B cell (primary cell): ENCODE measurements at regions of chr6 and their contacts with region 1.

Region 1: GRCh38 chr6:158660333-158660754 is 10.5 kb downstream of the SYTL3 start:
- DNase-seq: peak; percentile 72
- ATAC-seq: peak; percentile 84
- H3K4me3 ChIP-seq: no peak overlapping the region
- H3K4me3 Mint-ChIP-seq: no peak overlapping the region
- H3K27ac ChIP-seq: no peak overlapping the region
- H3K27ac Mint-ChIP-seq: no peak overlapping the region
- H3K4me1 ChIP-seq: peaks cover 9 to 12% of the 10 kb centered on the region in 2 donors
- H3K4me1 Mint-ChIP-seq: peaks cover 8% of the 10 kb centered on the region
- H3K27me3 ChIP-seq: peaks cover 0 to 10% (median 5%) of the 10 kb centered on the region in 4 experiments
- H3K27me3 Mint-ChIP-seq: peaks cover 13% of the 10 kb centered on the region
- CTCF ChIP-seq: peak; percentile 77

Region 2: GRCh38 chr6:158636778-158637177 is 23.6 kb before region 1 on chr6:
- CTCF ChIA-PET with region 1: no interaction called
- POLR2A ChIA-PET with region 1: no interaction called
- intact Hi-C with region 1: no loop called
- DNase-seq: no peak
- ATAC-seq: no peak
- H3K4me3 ChIP-seq: no peak overlapping the region
- H3K4me3 Mint-ChIP-seq: no peak overlapping the region
- H3K27ac ChIP-seq: no peak overlapping the region
- H3K27ac Mint-ChIP-seq: no peak overlapping the region
- H3K4me1 ChIP-seq: no peaks in the 10 kb centered on the region
- H3K4me1 Mint-ChIP-seq: peaks cover 12% of the 10 kb centered on the region
- H3K27me3 ChIP-seq: no peaks in the 10 kb centered on the region
- H3K27me3 Mint-ChIP-seq: no peaks in the 10 kb centered on the region
- CTCF ChIP-seq: no peak

Region 3: DNA sequence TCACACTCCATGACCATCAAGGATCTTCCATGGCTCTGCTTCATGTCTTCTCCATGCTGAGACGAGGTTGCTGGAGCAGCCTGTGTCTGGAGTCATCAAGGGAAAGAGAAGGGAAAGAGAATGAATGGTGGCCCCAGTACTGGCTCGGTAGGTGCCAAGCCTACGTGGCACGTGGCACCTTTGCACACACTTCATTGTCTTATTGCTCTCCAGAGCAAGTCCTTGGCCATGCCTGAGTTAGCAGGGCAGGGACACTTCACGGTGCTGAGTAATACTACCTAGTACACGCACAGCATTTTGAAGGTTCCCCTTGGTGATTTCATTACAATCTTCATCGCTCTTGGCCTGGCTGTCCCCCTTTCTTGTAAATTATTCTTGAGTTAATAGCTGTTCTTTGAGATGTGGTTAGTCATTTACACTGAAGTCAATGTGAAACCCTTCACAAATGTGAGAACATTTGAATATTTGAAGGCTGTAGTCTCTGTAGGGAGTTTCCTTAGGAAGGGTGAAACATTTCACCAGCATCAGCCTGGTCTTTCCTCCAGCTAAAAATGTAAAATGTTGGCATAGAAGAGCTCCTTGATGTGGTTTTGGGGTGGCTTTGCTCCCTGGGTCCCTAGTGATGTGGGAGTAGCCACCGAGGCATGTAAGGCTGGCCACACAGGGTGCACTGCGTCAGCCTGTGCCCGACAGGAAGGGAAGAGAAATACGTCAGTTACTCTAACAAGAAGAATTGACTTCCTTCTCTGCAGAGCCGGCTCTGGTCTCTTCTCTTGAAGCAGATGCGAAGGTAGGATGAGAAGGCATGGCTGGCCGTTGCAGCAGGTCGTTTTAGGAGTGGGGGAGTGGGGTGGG is 10.8 kb before region 1 on chr6 and contains the start of gene SYTL3:
- CTCF ChIA-PET with region 1: interaction called, 36 read pairs
- POLR2A ChIA-PET with region 1: no interaction called
- intact Hi-C with region 1: loop called (anchors 2 kb)
- DNase-seq: peak; percentile 79
- ATAC-seq: peak; percentile 68
- H3K4me3 ChIP-seq: peak within 1 kb of the TSS in 3 of 5 experiments; percentile 29 to 39 (median 30)
- H3K4me3 Mint-ChIP-seq: peak within 1 kb of the TSS; percentile 85
- H3K27ac ChIP-seq: peak within 1 kb of the TSS; percentile 13 to 84
- H3K27ac Mint-ChIP-seq: peak within 1 kb of the TSS; percentile 98
- H3K4me1 ChIP-seq: peaks cover 18 to 26% of the 10 kb centered on the region in 2 donors
- H3K4me1 Mint-ChIP-seq: peaks cover 41% of the 10 kb centered on the region
- H3K27me3 ChIP-seq: peaks cover 0 to 3% (median 0%) of the 10 kb centered on the region in 4 experiments
- H3K27me3 Mint-ChIP-seq: no peaks in the 10 kb centered on the region
- CTCF ChIP-seq: no peak
- total RNA-seq, gene SYTL3: 4.4 and 5.4 TPM in 2 replicates

Region 4: GRCh38 chr6:158938811-158939254 is 278.5 kb after region 1 on chr6:
- CTCF ChIA-PET with region 1: no interaction called
- POLR2A ChIA-PET with region 1: no interaction called
- intact Hi-C with region 1: no loop called
- DNase-seq: peak; percentile 55
- ATAC-seq: peak; percentile 57
- H3K4me3 ChIP-seq: peak overlapping the region in 4 of 5 experiments; percentile 38 to 65 (median 54)
- H3K4me3 Mint-ChIP-seq: peak overlapping the region; percentile 81
- H3K27ac ChIP-seq: peak overlapping the region in 1 of 2 donors; percentile 19
- H3K27ac Mint-ChIP-seq: peak overlapping the region; percentile 70
- H3K4me1 ChIP-seq: peaks cover 20 to 21% of the 10 kb centered on the region in 2 donors
- H3K4me1 Mint-ChIP-seq: peaks cover 19% of the 10 kb centered on the region
- H3K27me3 ChIP-seq: no peaks in the 10 kb centered on the region
- H3K27me3 Mint-ChIP-seq: no peaks in the 10 kb centered on the region
- CTCF ChIP-seq: no peak